OCI-LY7 (cell line): ENCODE measurements at regions of chr15 and their contacts with region 1.

Region 1: GRCh38 chr15:28975766-28976179 is 90.0 kb downstream of the APBA2 start:
- DNase-seq: peak; percentile 67
- H3K4me3 ChIP-seq: no peak overlapping the region
- H3K27ac ChIP-seq: no peak overlapping the region
- H3K4me1 ChIP-seq: no peaks in the 10 kb centered on the region
- CTCF ChIP-seq: peak; percentile 95

Region 2: DNA sequence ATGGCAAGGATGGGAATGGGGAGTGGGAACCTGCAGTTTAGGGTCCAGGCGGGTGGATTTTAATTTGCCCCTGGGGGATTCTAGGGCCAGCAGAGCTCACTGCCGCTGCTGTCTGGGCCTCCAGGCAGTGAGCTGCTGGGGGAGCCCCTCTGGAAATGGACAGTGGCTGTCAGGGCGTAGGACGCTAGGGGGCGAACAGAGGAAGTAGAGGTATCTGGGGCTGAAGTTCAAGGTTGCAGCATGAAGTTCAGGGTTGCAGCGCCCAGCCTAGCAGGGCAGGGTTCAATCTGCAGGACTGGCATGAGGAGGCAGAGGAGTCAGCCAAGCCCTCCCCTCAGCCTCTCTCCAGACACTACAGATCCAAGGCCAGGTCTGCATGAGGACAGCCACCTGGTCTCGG is 40.4 kb before region 1 on chr15:
- CTCF ChIA-PET with region 1: interaction called, 4 read pairs
- POLR2A ChIA-PET with region 1: no interaction called
- intact Hi-C with region 1: loop called (anchors 2 kb)
- DNase-seq: peak; percentile 48
- H3K4me3 ChIP-seq: no peak overlapping the region
- H3K27ac ChIP-seq: no peak overlapping the region
- H3K4me1 ChIP-seq: peaks cover 14% of the 10 kb centered on the region
- CTCF ChIP-seq: peak; percentile 75

Region 3: GRCh38 chr15:29196290-29196689 is 220.5 kb after region 1 on chr15:
- CTCF ChIA-PET with region 1: no interaction called
- POLR2A ChIA-PET with region 1: no interaction called
- intact Hi-C with region 1: no loop called
- DNase-seq: no peak
- H3K4me3 ChIP-seq: no peak overlapping the region
- H3K27ac ChIP-seq: no peak overlapping the region
- H3K4me1 ChIP-seq: no peaks in the 10 kb centered on the region
- CTCF ChIP-seq: no peak